ENCODE measurements at regions of chr2 and their contacts with region 1.

Region 1: DNA sequence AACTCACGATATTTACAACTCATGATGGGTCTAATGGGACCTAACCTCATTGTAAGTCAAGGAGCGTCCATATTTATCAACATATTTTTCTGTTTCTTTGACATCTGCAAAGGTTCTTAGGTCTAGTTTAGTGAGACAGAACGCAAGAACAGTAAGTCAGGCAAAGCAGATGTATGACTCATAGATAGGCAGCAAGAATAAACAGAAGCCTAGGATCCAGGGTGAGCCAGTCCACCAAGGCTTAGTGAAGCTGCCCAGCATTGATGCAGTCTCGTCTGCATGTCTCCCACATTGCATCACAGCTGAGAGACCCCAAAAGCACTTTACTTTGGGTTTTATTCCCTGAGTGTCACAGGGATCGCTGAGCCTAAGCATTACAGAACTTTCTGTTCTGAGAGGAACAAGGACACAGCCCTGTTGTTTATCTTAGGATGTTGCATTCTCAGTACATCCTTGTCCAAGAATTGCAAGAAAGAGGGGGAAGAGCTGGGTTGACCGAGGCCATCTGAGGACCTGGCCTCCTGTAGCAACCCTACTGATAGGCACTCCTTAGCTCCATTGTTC is 29.6 kb upstream of the TMEM177 start:
- DNase-seq: no peak
- ATAC-seq: no peak
- H3K4me3 ChIP-seq: no peak overlapping the region
- H3K4me3 Mint-ChIP-seq: no peak overlapping the region
- H3K27ac ChIP-seq: no peak overlapping the region
- H3K27ac Mint-ChIP-seq: no peak overlapping the region
- H3K4me1 ChIP-seq: no peaks in the 10 kb centered on the region
- H3K4me1 Mint-ChIP-seq: no peaks in the 10 kb centered on the region
- H3K27me3 ChIP-seq: peaks cover 2 to 4% of the 10 kb centered on the region in 2 experiments
- H3K27me3 Mint-ChIP-seq: peaks cover 15% of the 10 kb centered on the region
- CTCF ChIP-seq: no peak

Region 2: DNA sequence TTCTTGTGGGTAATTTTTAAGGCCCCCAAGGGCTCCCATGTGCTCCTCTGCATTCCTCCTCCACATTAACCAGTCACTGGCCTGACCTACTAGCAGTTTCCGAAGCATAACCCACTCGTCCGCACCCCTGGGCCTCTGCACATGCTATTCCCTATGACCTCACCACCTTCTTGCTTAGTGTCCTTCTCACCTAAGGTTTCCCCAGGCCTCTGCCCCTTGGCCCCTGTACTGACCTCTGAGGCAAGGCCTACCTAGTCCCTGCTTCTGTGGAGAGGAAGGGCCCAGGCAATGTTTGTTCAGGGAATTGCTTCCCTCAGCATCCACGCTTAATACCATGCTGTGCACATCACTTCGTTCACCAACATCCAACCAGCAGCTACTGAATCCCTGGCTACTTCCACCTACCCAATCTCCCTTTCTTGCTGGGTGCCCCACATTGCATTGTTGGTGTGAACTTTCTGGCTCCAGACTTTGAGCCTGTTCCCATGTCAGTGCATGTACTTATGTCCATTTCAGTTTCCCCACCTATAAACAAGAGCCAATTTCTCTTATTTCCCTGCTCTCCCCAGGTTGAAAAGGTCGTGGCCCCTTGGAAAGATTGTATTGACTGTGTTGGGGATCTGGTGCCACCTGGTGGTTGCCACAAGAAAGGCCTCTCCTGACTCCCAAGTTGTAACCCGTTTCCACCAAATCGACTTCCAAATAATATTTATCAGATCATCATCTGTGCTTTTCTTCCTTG is 10.3 kb after region 1 on chr2:
- CTCF ChIA-PET with region 1: interaction called, 25 read pairs
- POLR2A ChIA-PET with region 1: no interaction called
- intact Hi-C with region 1: no loop called
- DNase-seq: peak in 4 of 9 experiments; percentile 37 to 60 (median 45)
- ATAC-seq: no peak
- H3K4me3 ChIP-seq: no peak overlapping the region
- H3K4me3 Mint-ChIP-seq: no peak overlapping the region
- H3K27ac ChIP-seq: no peak overlapping the region
- H3K27ac Mint-ChIP-seq: no peak overlapping the region
- H3K4me1 ChIP-seq: no peaks in the 10 kb centered on the region
- H3K4me1 Mint-ChIP-seq: peaks cover 2% of the 10 kb centered on the region
- H3K27me3 ChIP-seq: no peaks in the 10 kb centered on the region
- H3K27me3 Mint-ChIP-seq: peaks cover 7% of the 10 kb centered on the region
- CTCF ChIP-seq: peak; percentile 76

Region 3: DNA sequence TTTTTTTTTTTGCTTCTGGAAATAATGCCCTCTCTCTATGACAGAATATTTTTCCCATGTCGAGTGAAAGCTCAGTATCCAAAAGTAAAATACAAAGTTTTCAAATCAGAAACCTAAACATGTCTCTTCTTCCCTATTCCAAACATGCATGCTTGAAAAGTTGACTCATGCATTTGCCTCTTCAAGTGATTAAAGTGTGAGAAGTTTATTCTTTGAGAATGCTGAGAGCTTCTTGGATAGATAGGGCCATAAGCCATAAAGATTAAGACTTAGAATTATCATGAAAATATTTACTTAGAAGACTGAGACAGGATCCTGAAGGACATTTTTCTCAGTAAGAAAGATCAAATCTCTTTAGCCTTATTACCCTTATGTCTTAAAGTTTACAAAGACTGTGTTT is 264.8 kb after region 1 on chr2:
- CTCF ChIA-PET with region 1: no interaction called
- POLR2A ChIA-PET with region 1: no interaction called
- intact Hi-C with region 1: no loop called
- DNase-seq: no peak
- ATAC-seq: no peak
- H3K4me3 ChIP-seq: no peak overlapping the region
- H3K4me3 Mint-ChIP-seq: no peak overlapping the region
- H3K27ac ChIP-seq: no peak overlapping the region
- H3K27ac Mint-ChIP-seq: no peak overlapping the region
- H3K4me1 ChIP-seq: no peaks in the 10 kb centered on the region
- H3K4me1 Mint-ChIP-seq: peaks cover 9% of the 10 kb centered on the region
- H3K27me3 ChIP-seq: no peaks in the 10 kb centered on the region
- H3K27me3 Mint-ChIP-seq: no peaks in the 10 kb centered on the region
- CTCF ChIP-seq: no peak